Motor neuron (in vitro differentiated cells): ENCODE measurements at regions of chr14 and their contacts with region 1.

Region 1: GRCh38 chr14:58166005-58166983 is 14.3 kb upstream of the ARMH4 start:
- ATAC-seq: peak; percentile 55 to 82 (median 70)
- H3K4me3 ChIP-seq: no peak overlapping the region
- H3K27ac ChIP-seq: no peak overlapping the region
- H3K4me1 ChIP-seq: peaks cover 0 to 3% of the 10 kb centered on the region in 2 donors

Region 2: GRCh38 chr14:58107947-58108552 is 58.2 kb before region 1 on chr14:
- in situ Hi-C with region 1: loop called in 1 of 9 experiments (anchors 10 kb)
- ATAC-seq: peak in 5 of 8 experiments; percentile 42 to 55 (median 46)
- H3K4me3 ChIP-seq: no peak overlapping the region
- H3K27ac ChIP-seq: no peak overlapping the region
- H3K4me1 ChIP-seq: no peaks in the 10 kb centered on the region

Region 3: GRCh38 chr14:58331111-58331510 is 164.8 kb after region 1 on chr14:
- in situ Hi-C with region 1: no loop called
- ATAC-seq: peak; percentile 91 to 99 (median 98)
- H3K4me3 ChIP-seq: peak overlapping the region; percentile 22 to 38 (median 33)
- H3K27ac ChIP-seq: peak overlapping the region; percentile 32 to 38
- H3K4me1 ChIP-seq: peaks cover 0 to 10% of the 10 kb centered on the region in 2 donors